ENCODE measurements at regions of chr11 and their contacts with region 1.

Region 1: GRCh38 chr11:62974848-62975522 is 9.8 kb downstream of the SLC22A6 start:
- DNase-seq: peak; percentile 15
- H3K4me3 ChIP-seq: no peak overlapping the region
- H3K27ac ChIP-seq: no peak overlapping the region
- H3K4me1 ChIP-seq: no peaks in the 10 kb centered on the region
- H3K27me3 ChIP-seq: no peaks in the 10 kb centered on the region
- CTCF ChIP-seq: peak; percentile 28 to 56
- POLR2A ChIP-seq: no peak

Region 2: GRCh38 chr11:62999649-63000048 is 24.7 kb after region 1 on chr11:
- CTCF ChIA-PET with region 1: no interaction called
- POLR2A ChIA-PET with region 1: no interaction called
- dilution Hi-C with region 1: no loop called
- intact Hi-C with region 1: no loop called
- DNase-seq: no peak
- H3K4me3 ChIP-seq: no peak overlapping the region
- H3K27ac ChIP-seq: no peak overlapping the region
- H3K4me1 ChIP-seq: no peaks in the 10 kb centered on the region
- H3K27me3 ChIP-seq: peaks cover 0 to 6% of the 10 kb centered on the region in 2 experiments
- CTCF ChIP-seq: no peak
- POLR2A ChIP-seq: no peak

Region 3: DNA sequence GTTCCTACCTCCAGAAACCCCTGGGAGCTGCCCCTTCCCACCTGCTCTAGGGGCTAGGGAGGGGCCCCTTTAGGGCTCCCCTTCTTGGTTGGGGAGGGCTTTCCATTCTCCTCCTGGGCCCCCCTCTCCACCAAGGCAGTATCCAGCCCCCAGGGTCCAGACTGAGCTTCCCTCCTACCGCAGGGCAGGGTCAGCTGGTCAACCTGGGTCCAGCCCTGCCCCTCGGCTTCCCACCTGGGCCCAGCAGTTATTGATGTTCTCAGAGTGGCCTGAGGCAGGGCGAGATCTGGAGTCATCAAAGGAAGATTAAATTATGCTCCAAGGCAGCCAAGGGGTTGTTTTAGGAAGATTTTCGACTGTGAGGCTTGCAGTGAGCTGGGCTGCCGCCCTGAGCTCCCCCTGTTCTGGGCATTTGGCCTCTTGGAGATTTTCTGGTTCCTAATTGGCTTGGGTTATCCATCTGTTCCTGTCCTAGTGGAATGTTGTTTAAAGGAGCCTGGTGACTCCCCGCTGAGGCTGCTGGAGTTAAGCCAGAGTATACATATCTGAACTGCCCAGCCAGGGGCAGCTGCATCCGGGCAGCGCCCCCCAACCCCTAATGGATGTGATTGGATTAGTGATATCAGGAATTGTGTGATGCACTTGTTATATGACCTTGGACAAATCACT is 42.5 kb after region 1 on chr11:
- CTCF ChIA-PET with region 1: interaction called, 16 read pairs
- POLR2A ChIA-PET with region 1: no interaction called
- dilution Hi-C with region 1: no loop called
- intact Hi-C with region 1: loop called (anchors 5 kb)
- DNase-seq: peak; percentile 95
- H3K4me3 ChIP-seq: no peak overlapping the region
- H3K27ac ChIP-seq: no peak overlapping the region
- H3K4me1 ChIP-seq: peaks cover 10% of the 10 kb centered on the region
- H3K27me3 ChIP-seq: peaks cover 0 to 3% of the 10 kb centered on the region in 2 experiments
- CTCF ChIP-seq: no peak
- POLR2A ChIP-seq: peak; percentile 44

Region 4: DNA sequence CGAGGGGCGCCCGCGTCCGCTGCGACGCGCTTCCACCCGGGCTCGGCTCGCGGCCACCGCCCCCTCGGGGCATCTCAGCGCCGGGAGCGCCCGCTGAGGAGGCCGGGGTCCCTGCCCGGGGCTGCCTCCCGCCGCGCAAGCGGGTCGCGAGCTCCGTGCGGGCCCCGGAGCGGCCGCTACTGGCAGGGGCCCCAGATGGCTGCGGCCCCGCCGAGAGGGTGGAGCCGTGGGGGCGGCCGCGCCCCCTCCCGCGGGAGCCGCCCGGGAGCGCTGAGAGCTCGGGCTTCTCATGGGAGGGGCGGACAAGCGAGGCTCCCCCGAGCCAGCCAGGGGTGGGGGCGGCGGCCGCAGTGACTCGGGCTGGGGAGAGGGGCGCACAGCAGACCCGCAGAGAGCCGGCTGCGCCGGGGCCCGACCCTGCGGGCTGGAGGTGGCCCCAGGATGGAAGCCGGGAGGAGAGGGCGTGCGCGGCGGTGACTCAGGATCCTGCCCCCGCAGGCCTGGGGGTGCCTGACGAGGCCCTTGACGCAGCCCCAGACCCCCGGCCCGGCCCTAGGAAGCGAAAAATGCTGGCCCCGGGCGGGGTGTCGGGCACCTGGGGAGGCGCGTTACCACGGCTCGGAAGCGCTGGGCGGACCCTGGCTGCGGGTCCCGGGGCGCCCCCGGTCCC is 794.2 kb after region 1 on chr11:
- CTCF ChIA-PET with region 1: no interaction called
- POLR2A ChIA-PET with region 1: no interaction called
- dilution Hi-C with region 1: no loop called
- intact Hi-C with region 1: no loop called
- DNase-seq: peak; percentile 21
- H3K4me3 ChIP-seq: peak overlapping the region; percentile 54 to 84 (median 55)
- H3K27ac ChIP-seq: no peak overlapping the region
- H3K4me1 ChIP-seq: peaks cover 18% of the 10 kb centered on the region
- H3K27me3 ChIP-seq: peaks cover 3 to 6% of the 10 kb centered on the region in 2 experiments
- CTCF ChIP-seq: no peak
- POLR2A ChIP-seq: no peak